Endothelial cell of umbilical vein (primary cell): ENCODE measurements at regions of chr15 and their contacts with region 1.

Region 1: DNA sequence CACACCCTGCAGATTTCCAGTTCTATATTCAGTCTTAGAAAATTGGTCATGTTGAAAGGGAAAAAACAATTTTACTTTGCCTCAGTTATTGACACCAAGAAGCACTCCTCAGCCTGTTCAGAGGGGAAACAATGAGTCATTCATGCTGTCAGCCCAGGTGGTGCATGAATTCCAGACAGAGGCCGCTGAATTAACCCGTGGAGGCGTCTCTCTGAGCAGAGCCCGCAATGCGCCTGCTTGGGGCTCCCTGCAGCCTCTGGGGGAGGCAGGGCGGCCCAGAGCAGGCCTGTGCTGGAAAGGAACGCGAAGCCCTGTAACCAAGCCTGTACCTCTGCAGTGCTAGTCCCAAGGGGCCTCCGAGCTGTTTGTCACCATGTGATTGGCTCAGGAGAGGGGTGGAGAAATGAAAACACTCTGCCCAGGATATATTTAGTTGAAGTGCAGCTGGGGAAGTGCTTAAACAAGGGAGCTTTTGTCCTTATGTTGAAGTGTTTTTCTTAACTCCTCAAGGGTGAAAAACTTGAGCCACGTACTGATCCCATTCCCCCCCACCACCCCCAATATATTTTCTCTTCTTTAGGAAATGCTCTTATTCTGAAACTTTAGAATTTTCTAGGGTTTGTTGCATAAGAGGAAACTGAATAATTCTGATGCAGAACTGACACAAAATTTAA is 68.3 kb upstream of the CHD2 start:
- DNase-seq: peak; percentile 96
- H3K4me3 ChIP-seq: peak overlapping the region in 1 of 3 experiments; percentile 22
- H3K27ac ChIP-seq: peak overlapping the region; percentile 54
- H3K4me1 ChIP-seq: peaks cover 18% of the 10 kb centered on the region
- H3K27me3 ChIP-seq: no peaks in the 10 kb centered on the region
- CTCF ChIP-seq: no peak
- POLR2A ChIP-seq: no peak

Region 2: DNA sequence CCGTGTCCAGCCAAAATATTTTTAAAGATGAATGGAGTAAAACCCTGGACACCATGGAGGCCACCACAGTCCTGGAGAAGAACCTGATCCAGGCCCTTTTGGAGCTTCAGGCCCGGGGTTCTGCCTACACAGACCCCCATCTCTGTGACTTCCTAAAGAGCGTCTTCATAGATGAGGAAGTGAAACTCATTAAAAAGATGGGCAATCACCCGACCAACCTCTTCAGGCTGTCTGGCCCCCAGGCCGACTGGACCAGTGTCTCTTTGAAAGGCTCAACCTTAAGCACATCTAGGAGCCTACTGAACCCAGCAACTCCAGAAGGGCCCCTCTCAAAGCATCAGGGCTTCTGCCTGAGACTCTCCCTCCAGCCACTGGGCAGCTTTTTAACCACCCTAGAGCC is 68.3 kb before region 1 on chr15:
- CTCF ChIA-PET with region 1: no interaction called
- POLR2A ChIA-PET with region 1: no interaction called
- dilution Hi-C with region 1: no loop called
- intact Hi-C with region 1: no loop called
- DNase-seq: no peak
- H3K4me3 ChIP-seq: no peak overlapping the region
- H3K27ac ChIP-seq: no peak overlapping the region
- H3K4me1 ChIP-seq: no peaks in the 10 kb centered on the region
- H3K27me3 ChIP-seq: no peaks in the 10 kb centered on the region
- CTCF ChIP-seq: no peak
- POLR2A ChIP-seq: no peak

Region 3: GRCh38 chr15:92820236-92821021 is 11.4 kb before region 1 on chr15:
- CTCF ChIA-PET with region 1: interaction called, 7 read pairs
- POLR2A ChIA-PET with region 1: interaction called, 6 read pairs
- dilution Hi-C with region 1: no loop called
- intact Hi-C with region 1: loop called (anchors 1 kb)
- DNase-seq: peak; percentile 94
- H3K4me3 ChIP-seq: peak overlapping the region; percentile 15 to 62 (median 19)
- H3K27ac ChIP-seq: peak overlapping the region; percentile 64
- H3K4me1 ChIP-seq: peaks cover 9% of the 10 kb centered on the region
- H3K27me3 ChIP-seq: peaks cover 0 to 2% of the 10 kb centered on the region in 2 experiments
- CTCF ChIP-seq: no peak
- POLR2A ChIP-seq: peak; percentile 79

Region 4: GRCh38 chr15:92845126-92845508 is 13.3 kb after region 1 on chr15:
- CTCF ChIA-PET with region 1: interaction called, 10 read pairs
- POLR2A ChIA-PET with region 1: no interaction called
- dilution Hi-C with region 1: no loop called
- intact Hi-C with region 1: no loop called
- DNase-seq: peak; percentile 81
- H3K4me3 ChIP-seq: no peak overlapping the region
- H3K27ac ChIP-seq: no peak overlapping the region
- H3K4me1 ChIP-seq: peaks cover 9% of the 10 kb centered on the region
- H3K27me3 ChIP-seq: peaks cover 49 to 54% of the 10 kb centered on the region in 2 experiments
- CTCF ChIP-seq: no peak
- POLR2A ChIP-seq: no peak

Region 5: DNA sequence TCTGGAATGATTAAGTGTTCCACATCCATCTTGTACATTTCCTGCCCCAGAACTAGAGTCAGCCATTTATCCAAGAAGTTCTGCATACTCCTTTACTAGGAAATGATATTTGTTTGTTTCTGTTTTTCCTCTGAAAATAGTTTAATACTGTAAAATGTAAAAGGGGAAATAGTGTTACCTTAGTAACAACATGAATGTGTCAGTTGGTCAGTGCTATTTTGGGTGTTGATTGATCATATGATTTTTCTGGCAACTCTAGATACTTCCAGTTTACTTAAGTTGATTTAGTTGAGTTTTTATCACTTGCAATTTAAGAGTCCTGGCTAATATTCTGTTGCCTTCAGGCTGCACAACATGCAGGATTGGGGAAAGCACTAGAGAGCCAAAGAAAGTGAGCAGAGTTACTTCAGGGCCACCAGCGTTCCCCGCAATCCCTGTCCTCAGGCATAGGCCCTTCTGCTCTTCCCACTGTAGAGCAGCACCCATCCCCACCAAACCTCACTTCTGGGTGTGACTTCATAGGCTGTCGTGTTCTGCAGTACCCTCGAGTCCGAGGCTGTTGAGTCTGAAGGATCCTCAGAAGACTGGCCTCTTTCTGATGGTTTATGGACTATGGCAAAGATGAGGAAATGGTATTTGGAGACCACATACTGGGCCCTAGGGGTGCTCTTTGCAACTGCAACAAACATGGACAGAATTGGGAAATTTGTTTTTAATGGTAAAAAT is 137.3 kb after region 1 on chr15:
- CTCF ChIA-PET with region 1: no interaction called
- POLR2A ChIA-PET with region 1: no interaction called
- dilution Hi-C with region 1: no loop called
- intact Hi-C with region 1: no loop called
- DNase-seq: peak; percentile 14
- H3K4me3 ChIP-seq: no peak overlapping the region
- H3K27ac ChIP-seq: no peak overlapping the region
- H3K4me1 ChIP-seq: no peaks in the 10 kb centered on the region
- H3K27me3 ChIP-seq: no peaks in the 10 kb centered on the region
- CTCF ChIP-seq: no peak
- POLR2A ChIP-seq: no peak